ENCODE measurements at regions of chr3 and their contacts with region 1.

Region 1: GRCh38 chr3:163785693-163786092 is 1292.6 kb downstream of the SI start:
- DNase-seq: no peak
- H3K4me3 ChIP-seq: no peak overlapping the region
- H3K27ac ChIP-seq: no peak overlapping the region
- H3K4me1 ChIP-seq: no peaks in the 10 kb centered on the region
- H3K27me3 ChIP-seq: no peaks in the 10 kb centered on the region
- CTCF ChIP-seq: no peak
- EP300 ChIP-seq: no peak
- POLR2A ChIP-seq: no peak

Region 2: GRCh38 chr3:162367429-162368260 is 1418.0 kb before region 1 on chr3:
- in situ Hi-C with region 1: no loop called
- intact Hi-C with region 1: no loop called
- DNase-seq: no peak
- H3K4me3 ChIP-seq: no peak overlapping the region
- H3K27ac ChIP-seq: no peak overlapping the region
- H3K4me1 ChIP-seq: peaks cover 0 to 3% (median 0%) of the 10 kb centered on the region in 4 donors
- H3K27me3 ChIP-seq: no peaks in the 10 kb centered on the region
- CTCF ChIP-seq: no peak
- EP300 ChIP-seq: no peak
- POLR2A ChIP-seq: no peak

Region 3: GRCh38 chr3:163048881-163049280 is 736.8 kb before region 1 on chr3:
- in situ Hi-C with region 1: no loop called
- intact Hi-C with region 1: no loop called
- DNase-seq: no peak
- H3K4me3 ChIP-seq: no peak overlapping the region
- H3K27ac ChIP-seq: no peak overlapping the region
- H3K4me1 ChIP-seq: no peaks in the 10 kb centered on the region
- H3K27me3 ChIP-seq: no peaks in the 10 kb centered on the region
- CTCF ChIP-seq: no peak
- EP300 ChIP-seq: no peak
- POLR2A ChIP-seq: no peak

Region 4: DNA sequence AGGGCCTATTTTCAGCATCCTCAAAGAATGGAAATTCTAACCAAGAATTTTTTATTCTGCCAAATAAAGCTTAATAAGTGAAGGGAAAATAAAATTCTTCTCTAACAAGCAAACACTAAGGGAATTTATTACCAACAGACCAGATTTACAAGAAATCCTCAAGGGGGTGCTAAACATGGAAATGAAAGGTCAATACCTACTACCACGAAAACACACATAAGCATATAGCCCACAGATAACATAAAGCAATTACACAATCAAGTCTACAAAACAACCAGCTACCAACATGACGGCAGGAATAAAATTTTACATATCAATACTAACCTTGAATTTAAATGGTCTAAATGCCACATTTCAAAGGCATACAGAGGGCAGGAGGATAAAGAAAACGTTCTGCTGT is 409.2 kb after region 1 on chr3:
- in situ Hi-C with region 1: no loop called
- intact Hi-C with region 1: loop called (anchors 5 kb)
- DNase-seq: no peak
- H3K4me3 ChIP-seq: no peak overlapping the region
- H3K27ac ChIP-seq: no peak overlapping the region
- H3K4me1 ChIP-seq: no peaks in the 10 kb centered on the region
- H3K27me3 ChIP-seq: no peaks in the 10 kb centered on the region
- CTCF ChIP-seq: no peak
- EP300 ChIP-seq: no peak
- POLR2A ChIP-seq: no peak